Activated CD4-positive, alpha-beta T cell treated with anti-CD3 and anti-CD28 coated beads, Interleukin-2, amount 10 ng/mL, durations not matched to agents 24 days and 14 days (primary cell): ENCODE measurements at regions of chrX and their contacts with region 1.

Region 1: DNA sequence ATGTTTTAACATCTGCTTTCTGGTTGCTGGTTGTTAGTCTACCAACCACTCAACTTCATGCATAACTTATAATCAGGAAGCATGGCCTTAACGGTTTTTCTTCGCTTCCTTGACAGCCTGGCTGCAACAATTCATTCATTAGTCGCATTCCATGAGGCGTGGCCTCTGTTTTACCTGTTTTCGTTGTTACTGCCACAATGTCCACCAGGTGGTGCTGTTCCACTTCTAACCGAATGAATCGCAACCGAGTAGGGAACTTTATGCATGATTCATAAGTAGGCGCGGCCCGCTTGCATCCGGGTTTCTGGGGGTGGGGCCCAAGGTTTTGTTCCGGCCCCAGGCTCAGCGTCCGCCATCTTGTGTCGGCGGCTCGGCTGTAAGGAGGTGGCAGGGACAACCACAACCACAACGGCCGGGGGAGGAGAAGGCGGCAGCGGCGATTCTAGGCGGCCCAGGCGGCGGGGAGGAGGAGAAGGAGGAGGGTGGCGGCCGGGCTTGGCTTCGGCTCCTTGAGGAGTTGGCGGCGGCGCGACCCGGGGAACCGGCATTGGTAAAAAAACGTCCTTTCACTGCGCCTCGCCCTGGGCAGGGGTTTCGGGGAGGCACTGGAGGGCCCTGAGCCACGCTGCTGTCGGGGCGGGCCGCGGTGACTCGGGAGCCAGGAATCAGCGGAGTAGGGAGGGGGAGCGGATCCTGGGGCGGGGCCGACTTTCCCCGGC is at the start of gene UBA1:
- DNase-seq: peak; percentile 97
- H3K4me3 Mint-ChIP-seq: peak within 1 kb of the TSS; percentile 94
- H3K27ac Mint-ChIP-seq: peak within 1 kb of the TSS; percentile 98
- H3K4me1 Mint-ChIP-seq: peaks cover 35% of the 10 kb centered on the region
- H3K27me3 Mint-ChIP-seq: no peaks in the 10 kb centered on the region
- total RNA-seq, gene UBA1: 233 and 246 TPM in 2 replicates

Region 2: GRCh38 chrX:47144626-47145394 is 48.8 kb before region 1 on chrX and contains the starts of genes NDUFB11 and RBM10:
- intact Hi-C with region 1: loop called (anchors 2 kb)
- DNase-seq: peak; percentile 97
- H3K4me3 Mint-ChIP-seq: peak within 1 kb of the TSS; percentile 100
- H3K27ac Mint-ChIP-seq: peak within 1 kb of the TSS; percentile 100
- H3K4me1 Mint-ChIP-seq: peaks cover 16% of the 10 kb centered on the region
- H3K27me3 Mint-ChIP-seq: no peaks in the 10 kb centered on the region
- total RNA-seq, gene NDUFB11: 86.8 and 89.5 TPM in 2 replicates
- total RNA-seq, gene RBM10: 64.3 and 64.6 TPM in 2 replicates

Region 3: GRCh38 chrX:47233337-47234113 is 39.9 kb after region 1 on chrX:
- intact Hi-C with region 1: loop called (anchors 1 kb)
- DNase-seq: peak; percentile 97
- H3K4me3 Mint-ChIP-seq: peak overlapping the region; percentile 87
- H3K27ac Mint-ChIP-seq: peak overlapping the region; percentile 98
- H3K4me1 Mint-ChIP-seq: peaks cover 20% of the 10 kb centered on the region
- H3K27me3 Mint-ChIP-seq: peaks cover 3% of the 10 kb centered on the region

Region 4: GRCh38 chrX:47366028-47366722 is 172.5 kb after region 1 on chrX:
- intact Hi-C with region 1: loop called (anchors 5 kb)
- DNase-seq: peak; percentile 86
- H3K4me3 Mint-ChIP-seq: peak overlapping the region; percentile 93
- H3K27ac Mint-ChIP-seq: peak overlapping the region; percentile 91
- H3K4me1 Mint-ChIP-seq: peaks cover 6% of the 10 kb centered on the region
- H3K27me3 Mint-ChIP-seq: no peaks in the 10 kb centered on the region

Region 5: DNA sequence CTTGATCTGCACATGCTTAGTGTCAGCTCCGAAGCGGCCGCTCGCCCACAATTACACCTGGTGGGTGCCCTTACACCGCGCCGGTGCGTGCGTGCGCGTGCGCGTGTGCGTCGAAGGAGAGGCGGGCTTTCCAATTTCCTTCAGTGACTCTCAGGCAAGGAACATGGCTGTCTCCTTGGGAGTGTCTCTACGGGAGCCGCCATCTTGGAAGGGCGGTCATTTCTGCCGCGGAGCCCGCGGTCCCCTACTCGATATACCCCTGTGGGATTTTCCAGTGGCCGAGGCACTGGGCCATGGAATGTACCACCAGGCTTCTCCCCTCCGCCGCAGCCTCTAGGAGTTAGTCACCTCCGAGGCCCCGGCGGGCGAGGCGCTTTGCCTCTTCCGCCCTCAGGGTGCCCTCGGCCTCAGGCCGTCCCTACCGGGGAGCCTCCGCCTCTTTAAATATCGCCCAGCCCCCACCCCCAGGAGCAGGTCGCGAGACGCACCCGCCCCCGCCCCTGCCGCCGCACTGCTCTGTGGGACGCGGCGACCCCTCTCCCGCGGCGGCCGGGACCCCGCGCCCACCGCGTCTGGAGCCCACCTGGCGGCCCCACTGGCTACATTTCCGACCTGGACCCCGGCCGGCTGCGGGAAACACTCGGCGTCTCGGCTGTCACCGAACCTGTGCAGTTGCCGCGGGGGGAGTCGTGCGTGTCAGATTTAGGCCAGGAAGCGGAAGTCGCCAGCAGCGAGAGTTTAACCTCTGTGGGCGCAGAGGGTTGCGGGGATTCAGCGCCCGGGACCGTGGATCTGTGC is 289.1 kb after region 1 on chrX and contains the start of gene ZNF41:
- intact Hi-C with region 1: loop called (anchors 1 kb)
- DNase-seq: peak; percentile 90
- H3K4me3 Mint-ChIP-seq: peak within 1 kb of the TSS; percentile 97
- H3K27ac Mint-ChIP-seq: peak within 1 kb of the TSS; percentile 90
- H3K4me1 Mint-ChIP-seq: peaks cover 17% of the 10 kb centered on the region
- H3K27me3 Mint-ChIP-seq: no peaks in the 10 kb centered on the region
- total RNA-seq, gene ZNF41: 10.0 and 10.5 TPM in 2 replicates